ENCODE measurements at regions of chr1 and their contacts with region 1.

Region 1: GRCh38 chr1:39398278-39399021 is 93.0 kb upstream of the BMP8A start:
- DNase-seq: peak; percentile 69
- H3K4me3 Mint-ChIP-seq: peak overlapping the region; percentile 32
- H3K27ac Mint-ChIP-seq: peak overlapping the region; percentile 86
- H3K4me1 Mint-ChIP-seq: peaks cover 62% of the 10 kb centered on the region
- H3K27me3 Mint-ChIP-seq: no peaks in the 10 kb centered on the region

Region 2: DNA sequence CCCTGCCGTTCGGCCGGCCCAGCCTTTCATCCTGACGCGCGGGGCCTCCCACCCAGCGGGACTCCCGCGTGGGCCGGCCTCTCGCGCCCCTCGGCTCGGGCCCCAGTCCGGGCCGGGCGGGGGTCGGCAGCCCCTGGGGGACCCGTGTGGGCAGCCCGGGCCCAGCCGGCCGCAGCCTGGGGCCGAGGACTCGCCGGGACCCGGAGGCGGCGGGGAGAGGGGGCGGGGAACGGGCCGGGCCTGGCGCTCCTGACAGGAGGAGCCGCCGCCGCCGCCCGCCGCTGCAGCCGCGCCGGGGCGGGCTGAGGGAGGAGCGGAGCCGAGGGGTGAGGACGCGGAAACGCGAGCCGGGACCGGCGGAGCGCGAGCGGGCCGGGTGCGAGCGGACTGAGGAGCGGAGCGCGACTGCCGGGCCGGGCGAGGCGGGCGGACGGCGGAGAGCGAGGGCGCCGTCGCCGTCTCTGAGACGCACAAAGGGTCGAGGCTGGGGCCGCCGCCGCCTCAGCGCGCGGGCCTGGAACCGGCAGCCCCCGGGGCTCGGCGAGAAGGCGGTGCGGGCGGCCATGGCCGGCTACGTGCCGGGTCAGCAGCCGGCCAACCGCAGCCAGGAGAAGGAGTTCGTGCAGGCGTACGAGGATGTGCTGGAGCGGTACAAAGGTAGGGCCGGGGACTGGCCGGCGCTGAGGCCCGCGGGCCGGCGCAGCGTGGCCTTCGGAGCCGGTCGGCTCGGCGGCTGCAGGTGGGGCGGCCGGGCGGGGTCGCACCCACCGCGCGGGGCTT is 293.2 kb before region 1 on chr1:
- CTCF ChIA-PET with region 1: no interaction called
- POLR2A ChIA-PET with region 1: no interaction called
- intact Hi-C with region 1: loop called (anchors 5 kb)
- DNase-seq: peak; percentile 65
- H3K4me3 Mint-ChIP-seq: peak overlapping the region; percentile 63
- H3K27ac Mint-ChIP-seq: no peak overlapping the region
- H3K4me1 Mint-ChIP-seq: peaks cover 38% of the 10 kb centered on the region
- H3K27me3 Mint-ChIP-seq: peaks cover 2% of the 10 kb centered on the region

Region 3: DNA sequence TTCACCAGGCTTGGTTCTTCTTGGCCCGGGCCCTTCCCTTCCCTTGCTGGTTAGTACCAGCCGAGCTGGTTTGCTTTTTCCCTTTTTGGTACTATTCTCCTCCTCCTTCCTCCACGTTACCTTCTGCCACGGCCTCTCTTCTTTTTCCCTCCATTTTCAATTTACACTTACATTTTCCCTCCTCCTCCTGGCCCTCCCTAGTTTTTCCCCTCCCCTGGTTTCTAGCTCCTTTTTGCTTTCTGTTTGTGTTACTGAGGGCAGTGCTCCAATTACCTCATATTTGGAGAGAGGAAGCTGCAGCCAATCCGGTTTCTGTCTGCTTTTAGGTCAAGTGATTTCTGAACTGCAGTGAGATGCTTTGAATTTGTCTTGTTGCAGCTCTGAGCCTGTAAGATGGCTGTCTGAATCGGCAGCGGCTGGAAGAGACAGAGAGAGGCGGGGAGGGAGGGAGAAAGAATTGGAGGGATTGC is 130.3 kb before region 1 on chr1:
- CTCF ChIA-PET with region 1: no interaction called
- POLR2A ChIA-PET with region 1: interaction called, 3 read pairs
- intact Hi-C with region 1: loop called (anchors 5 kb)
- DNase-seq: peak; percentile 39
- H3K4me3 Mint-ChIP-seq: peak overlapping the region; percentile 64
- H3K27ac Mint-ChIP-seq: peak overlapping the region; percentile 81
- H3K4me1 Mint-ChIP-seq: peaks cover 89% of the 10 kb centered on the region
- H3K27me3 Mint-ChIP-seq: no peaks in the 10 kb centered on the region

Measured in activated CD4-positive, alpha-beta memory T cell treated with anti-CD3 and anti-CD28 coated beads for 36 hours (primary cell).